Right ventricle myocardium inferior (tissue), 1 donor: ENCODE measurements at regions of chrX and their contacts with region 1.

Region 1: GRCh38 chrX:23907498-23908218 is at the starts of genes APOO and CXorf58:
- DNase-seq: peak; percentile 96
- ATAC-seq: peak; percentile 98
- total RNA-seq, gene APOO: 112 TPM
- total RNA-seq, gene CXorf58: 0.32 TPM

Region 2: GRCh38 chrX:23667239-23668177 is 240.2 kb before region 1 on chrX and contains the start of gene PRDX4:
- intact Hi-C with region 1: loop called (anchors 1 kb)
- DNase-seq: peak; percentile 95
- ATAC-seq: peak; percentile 99
- total RNA-seq, gene PRDX4: 46.9 TPM

Region 3: DNA sequence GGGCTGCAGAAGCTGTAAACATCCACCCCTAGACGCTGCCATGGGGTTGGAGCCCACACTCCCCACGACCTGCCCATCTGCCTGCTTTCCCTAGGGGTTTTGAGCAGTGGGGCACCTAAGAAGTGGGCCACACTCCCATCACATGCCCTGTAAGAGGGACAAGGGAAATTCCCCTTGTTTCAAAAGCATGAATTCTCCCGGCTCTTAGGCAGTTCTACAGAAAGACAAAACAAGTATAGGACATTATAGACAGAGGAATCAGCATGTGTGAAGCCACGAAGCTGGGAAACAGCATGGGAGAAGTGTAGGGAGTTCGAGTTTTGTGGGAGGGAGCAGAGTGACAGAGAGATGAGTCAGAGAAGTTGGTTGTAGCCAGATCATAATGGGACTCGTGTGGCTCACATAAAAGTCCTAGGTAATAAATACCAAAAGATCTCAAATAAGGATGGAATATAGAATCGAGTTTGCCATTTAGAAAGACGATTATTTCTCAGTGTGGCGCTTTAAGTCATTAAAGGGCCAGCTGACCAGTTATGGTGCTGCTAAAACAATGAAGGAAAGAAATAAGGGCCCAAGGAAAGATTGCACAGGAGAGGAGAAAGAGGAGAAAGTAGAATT is 23.8 kb before region 1 on chrX:
- intact Hi-C with region 1: no loop called
- DNase-seq: no peak
- ATAC-seq: no peak

Region 4: GRCh38 chrX:24024819-24025740 is 117.4 kb after region 1 on chrX:
- intact Hi-C with region 1: loop called (anchors 2 kb)
- DNase-seq: peak; percentile 92
- ATAC-seq: peak; percentile 95